Endothelial cell of umbilical vein (primary cell): ENCODE measurements at regions of chr3 and their contacts with region 1.

Region 1: GRCh38 chr3:103991461-103992115 is 1375.1 kb upstream of the ALCAM start:
- DNase-seq: peak; percentile 17
- H3K4me3 ChIP-seq: no peak overlapping the region
- H3K27ac ChIP-seq: no peak overlapping the region
- H3K4me1 ChIP-seq: no peaks in the 10 kb centered on the region
- H3K27me3 ChIP-seq: no peaks in the 10 kb centered on the region
- CTCF ChIP-seq: peak; percentile 47
- POLR2A ChIP-seq: no peak

Region 2: DNA sequence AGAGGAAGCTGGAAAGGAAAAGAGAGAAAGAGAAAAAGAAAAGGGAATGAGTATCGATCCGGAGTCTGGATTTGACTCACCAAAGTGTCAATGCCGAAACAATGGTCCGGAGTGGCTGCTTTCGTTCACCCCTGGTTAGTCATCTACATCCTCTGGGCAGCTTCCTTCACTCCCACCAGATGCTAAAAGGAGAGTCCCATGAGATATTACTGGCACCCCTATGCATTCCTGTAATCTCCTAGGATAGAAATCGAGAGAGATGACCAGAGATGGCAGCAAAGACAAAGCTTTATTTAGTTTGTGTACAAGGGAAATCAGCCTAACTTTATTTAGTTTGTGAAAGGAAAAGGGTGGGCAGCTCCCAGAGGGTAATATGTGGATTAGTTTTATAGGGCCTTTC is 934.6 kb before region 1 on chr3:
- CTCF ChIA-PET with region 1: no interaction called
- POLR2A ChIA-PET with region 1: no interaction called
- dilution Hi-C with region 1: no loop called
- intact Hi-C with region 1: no loop called
- DNase-seq: no peak
- H3K4me3 ChIP-seq: no peak overlapping the region
- H3K27ac ChIP-seq: no peak overlapping the region
- H3K4me1 ChIP-seq: no peaks in the 10 kb centered on the region
- H3K27me3 ChIP-seq: no peaks in the 10 kb centered on the region
- CTCF ChIP-seq: no peak
- POLR2A ChIP-seq: no peak

Region 3: GRCh38 chr3:103653996-103654395 is 337.6 kb before region 1 on chr3:
- CTCF ChIA-PET with region 1: no interaction called
- POLR2A ChIA-PET with region 1: no interaction called
- dilution Hi-C with region 1: no loop called
- intact Hi-C with region 1: no loop called
- DNase-seq: no peak
- H3K4me3 ChIP-seq: no peak overlapping the region
- H3K27ac ChIP-seq: no peak overlapping the region
- H3K4me1 ChIP-seq: no peaks in the 10 kb centered on the region
- H3K27me3 ChIP-seq: no peaks in the 10 kb centered on the region
- CTCF ChIP-seq: no peak
- POLR2A ChIP-seq: no peak

Region 4: DNA sequence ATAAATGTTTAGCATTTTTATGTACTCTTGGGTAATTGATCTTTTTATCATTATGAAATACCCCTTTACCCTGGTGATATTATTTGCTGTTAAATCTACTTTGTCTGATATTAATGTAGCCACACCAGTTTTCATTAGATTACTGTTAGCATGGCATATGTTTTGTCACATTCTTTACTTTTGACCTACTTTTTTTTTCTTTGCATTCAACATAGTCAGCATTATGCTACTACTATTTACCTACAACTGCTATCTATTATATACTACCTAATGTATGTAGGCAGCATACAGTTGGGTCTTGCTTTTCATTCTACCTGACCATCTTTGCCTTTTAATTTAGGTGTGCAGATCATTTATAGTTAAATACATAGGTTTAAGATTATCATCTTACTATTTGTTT is 54.5 kb before region 1 on chr3:
- CTCF ChIA-PET with region 1: no interaction called
- POLR2A ChIA-PET with region 1: no interaction called
- dilution Hi-C with region 1: no loop called
- intact Hi-C with region 1: no loop called
- DNase-seq: no peak
- H3K4me3 ChIP-seq: no peak overlapping the region
- H3K27ac ChIP-seq: no peak overlapping the region
- H3K4me1 ChIP-seq: no peaks in the 10 kb centered on the region
- H3K27me3 ChIP-seq: no peaks in the 10 kb centered on the region
- CTCF ChIP-seq: no peak
- POLR2A ChIP-seq: no peak

Region 5: DNA sequence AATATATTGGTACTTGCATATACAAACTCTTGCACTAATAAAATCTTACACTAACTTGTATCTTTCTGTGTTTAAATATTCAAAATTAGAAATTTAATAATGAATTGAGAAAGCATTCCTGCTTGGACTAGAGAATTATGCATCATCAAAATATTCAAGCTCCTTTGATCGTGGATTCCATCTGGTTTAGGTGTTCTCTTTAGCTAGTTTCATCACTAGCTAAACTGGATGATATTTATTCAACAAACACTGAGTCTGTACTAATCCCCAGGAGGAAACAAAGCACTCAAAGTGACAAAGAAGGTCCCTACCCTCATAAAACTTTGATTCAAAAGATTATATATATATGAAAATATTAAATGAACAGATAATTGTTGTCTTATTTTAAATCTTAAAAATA is 14.2 kb after region 1 on chr3:
- CTCF ChIA-PET with region 1: interaction called, 16 read pairs
- POLR2A ChIA-PET with region 1: no interaction called
- dilution Hi-C with region 1: no loop called
- intact Hi-C with region 1: no loop called
- DNase-seq: no peak
- H3K4me3 ChIP-seq: no peak overlapping the region
- H3K27ac ChIP-seq: no peak overlapping the region
- H3K4me1 ChIP-seq: no peaks in the 10 kb centered on the region
- H3K27me3 ChIP-seq: no peaks in the 10 kb centered on the region
- CTCF ChIP-seq: no peak
- POLR2A ChIP-seq: no peak

Region 6: GRCh38 chr3:104066658-104067057 is 75.1 kb after region 1 on chr3:
- CTCF ChIA-PET with region 1: no interaction called
- POLR2A ChIA-PET with region 1: no interaction called
- dilution Hi-C with region 1: no loop called
- intact Hi-C with region 1: no loop called
- DNase-seq: no peak
- H3K4me3 ChIP-seq: no peak overlapping the region
- H3K27ac ChIP-seq: no peak overlapping the region
- H3K4me1 ChIP-seq: no peaks in the 10 kb centered on the region
- H3K27me3 ChIP-seq: no peaks in the 10 kb centered on the region
- CTCF ChIP-seq: no peak
- POLR2A ChIP-seq: no peak